ENCODE measurements at regions of chr16 and their contacts with region 1.

Region 1: GRCh38 chr16:3150346-3151218 is 15.8 kb downstream of the ZNF213 start:
- DNase-seq: peak; percentile 96
- ATAC-seq: peak; percentile 86
- H3K4me3 ChIP-seq: peak overlapping the region; percentile 58 to 87 (median 71)
- H3K4me3 Mint-ChIP-seq: peak overlapping the region; percentile 92
- H3K27ac ChIP-seq: peak overlapping the region; percentile 29 to 54
- H3K27ac Mint-ChIP-seq: peak overlapping the region; percentile 95
- H3K4me1 ChIP-seq: peaks cover 22 to 37% of the 10 kb centered on the region in 2 donors
- H3K4me1 Mint-ChIP-seq: peaks cover 28% of the 10 kb centered on the region
- H3K27me3 ChIP-seq: no peaks in the 10 kb centered on the region
- H3K27me3 Mint-ChIP-seq: no peaks in the 10 kb centered on the region
- CTCF ChIP-seq: no peak

Region 2: DNA sequence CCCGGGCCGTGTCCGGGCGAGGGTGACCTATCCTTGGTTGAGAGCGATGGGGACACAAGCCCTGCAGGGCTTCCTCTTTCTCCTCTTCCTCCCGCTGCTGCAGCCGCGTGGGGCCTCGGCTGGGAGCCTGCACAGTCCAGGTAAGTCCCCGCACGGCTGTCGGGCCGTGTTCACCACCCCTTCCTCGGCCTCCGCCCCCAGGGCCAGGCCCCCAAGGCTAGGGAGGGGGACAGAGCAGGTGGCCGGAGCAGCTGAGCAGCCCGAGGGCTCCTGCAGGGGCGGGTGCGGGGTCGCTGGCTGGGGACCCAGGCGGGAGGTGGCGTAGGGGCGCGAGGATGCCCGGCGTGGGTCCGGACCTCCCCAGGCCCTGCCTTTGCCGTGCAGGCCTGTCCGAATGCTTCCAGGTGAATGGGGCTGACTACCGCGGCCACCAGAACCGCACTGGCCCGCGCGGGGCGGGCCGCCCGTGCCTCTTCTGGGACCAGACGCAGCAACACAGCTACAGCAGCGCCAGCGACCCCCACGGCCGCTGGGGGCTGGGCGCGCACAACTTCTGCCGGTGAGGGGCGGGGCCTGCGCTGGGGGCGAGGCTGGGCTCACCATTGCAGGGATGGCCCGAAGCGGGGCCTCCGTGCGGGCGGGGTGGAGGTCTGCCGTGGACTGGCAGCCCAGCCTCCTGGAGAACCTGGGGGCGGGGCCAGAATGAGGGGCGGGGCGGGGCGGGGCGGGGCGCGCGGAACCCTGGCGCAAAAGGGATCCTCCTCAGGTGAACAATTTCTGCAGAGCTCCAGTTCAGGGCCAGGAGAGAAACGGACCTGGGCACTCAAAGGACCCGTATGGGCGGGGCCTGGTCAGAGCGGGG is 185.9 kb before region 1 on chr16:
- CTCF ChIA-PET with region 1: no interaction called
- POLR2A ChIA-PET with region 1: no interaction called
- intact Hi-C with region 1: no loop called
- DNase-seq: peak; percentile 76
- ATAC-seq: peak; percentile 22
- H3K4me3 ChIP-seq: peak overlapping the region in 4 of 5 experiments; percentile 39 to 61 (median 54)
- H3K4me3 Mint-ChIP-seq: peak overlapping the region; percentile 84
- H3K27ac ChIP-seq: no peak overlapping the region
- H3K27ac Mint-ChIP-seq: no peak overlapping the region
- H3K4me1 ChIP-seq: peaks cover 67% of the 10 kb centered on the region in 2 donors
- H3K4me1 Mint-ChIP-seq: peaks cover 37% of the 10 kb centered on the region
- H3K27me3 ChIP-seq: peaks cover 0 to 63% (median 19%) of the 10 kb centered on the region in 4 experiments
- H3K27me3 Mint-ChIP-seq: peaks cover 22% of the 10 kb centered on the region
- CTCF ChIP-seq: no peak

Region 3: DNA sequence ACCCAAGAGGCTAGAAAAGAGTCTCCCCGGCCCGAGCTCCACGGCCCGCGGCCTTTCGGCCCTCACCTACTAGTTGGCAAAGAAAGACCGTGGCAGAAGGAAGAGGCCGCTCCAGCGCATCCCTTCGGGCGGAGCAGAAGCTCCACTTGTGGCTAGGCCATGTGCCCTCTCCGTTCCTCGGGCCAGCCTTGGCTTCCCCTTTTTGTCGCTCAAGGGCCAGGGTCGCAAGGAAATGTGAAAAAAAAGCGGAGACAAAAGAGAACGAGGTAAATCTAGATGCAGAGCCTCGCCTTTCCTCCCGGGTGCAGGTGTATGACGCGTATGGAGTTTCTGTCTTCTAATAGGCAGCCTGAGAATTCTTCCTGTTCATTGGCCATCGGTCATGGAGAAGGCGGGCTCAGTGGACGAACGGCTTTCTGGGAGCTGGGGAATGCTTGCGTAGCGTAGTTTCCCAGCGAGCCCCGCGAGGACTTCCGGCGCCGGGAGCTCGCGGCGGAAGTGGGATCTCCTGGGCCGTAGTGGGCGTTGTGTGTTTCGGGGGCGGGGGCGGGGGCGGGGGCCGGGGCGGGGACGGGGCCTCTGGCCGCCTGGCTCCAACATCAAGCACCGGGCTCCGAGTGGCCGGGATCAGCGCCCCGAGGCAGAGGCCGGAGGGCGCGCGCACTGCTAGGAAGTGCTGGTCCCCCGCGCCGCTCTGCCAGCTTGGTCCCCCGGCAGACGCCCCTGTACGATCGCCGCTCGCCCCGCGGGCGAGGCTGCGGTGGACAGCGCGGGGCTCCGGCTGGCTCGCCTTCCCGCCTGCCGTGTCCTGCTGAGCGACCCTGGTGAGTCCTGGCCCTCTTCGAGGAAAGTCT is 15.8 kb before region 1 on chr16 and contains the start of gene ZNF213:
- CTCF ChIA-PET with region 1: interaction called, 42 read pairs
- POLR2A ChIA-PET with region 1: interaction called, 31 read pairs
- intact Hi-C with region 1: loop called (anchors 1 kb)
- DNase-seq: peak; percentile 97
- ATAC-seq: peak; percentile 98
- H3K4me3 ChIP-seq: peak within 1 kb of the TSS; percentile 70 to 99 (median 86)
- H3K4me3 Mint-ChIP-seq: peak within 1 kb of the TSS; percentile 98
- H3K27ac ChIP-seq: peak within 1 kb of the TSS; percentile 91 to 93
- H3K27ac Mint-ChIP-seq: peak within 1 kb of the TSS; percentile 97
- H3K4me1 ChIP-seq: peaks cover 15 to 20% of the 10 kb centered on the region in 2 donors
- H3K4me1 Mint-ChIP-seq: peaks cover 29% of the 10 kb centered on the region
- H3K27me3 ChIP-seq: no peaks in the 10 kb centered on the region
- H3K27me3 Mint-ChIP-seq: no peaks in the 10 kb centered on the region
- CTCF ChIP-seq: no peak
- total RNA-seq, gene ZNF213: 7.2 and 9.5 TPM in 2 replicates

Region 4: GRCh38 chr16:3173892-3174617 is 23.5 kb after region 1 on chr16:
- CTCF ChIA-PET with region 1: interaction called, 4 read pairs
- POLR2A ChIA-PET with region 1: no interaction called
- intact Hi-C with region 1: loop called (anchors 1 kb)
- DNase-seq: peak; percentile 44
- ATAC-seq: no peak
- H3K4me3 ChIP-seq: peak overlapping the region in 1 of 5 experiments; percentile 33
- H3K4me3 Mint-ChIP-seq: peak overlapping the region; percentile 23
- H3K27ac ChIP-seq: no peak overlapping the region
- H3K27ac Mint-ChIP-seq: no peak overlapping the region
- H3K4me1 ChIP-seq: peaks cover 40 to 47% of the 10 kb centered on the region in 2 donors
- H3K4me1 Mint-ChIP-seq: peaks cover 29% of the 10 kb centered on the region
- H3K27me3 ChIP-seq: peaks cover 0 to 84% (median 55%) of the 10 kb centered on the region in 4 experiments
- H3K27me3 Mint-ChIP-seq: peaks cover 77% of the 10 kb centered on the region
- CTCF ChIP-seq: no peak

Region 5: DNA sequence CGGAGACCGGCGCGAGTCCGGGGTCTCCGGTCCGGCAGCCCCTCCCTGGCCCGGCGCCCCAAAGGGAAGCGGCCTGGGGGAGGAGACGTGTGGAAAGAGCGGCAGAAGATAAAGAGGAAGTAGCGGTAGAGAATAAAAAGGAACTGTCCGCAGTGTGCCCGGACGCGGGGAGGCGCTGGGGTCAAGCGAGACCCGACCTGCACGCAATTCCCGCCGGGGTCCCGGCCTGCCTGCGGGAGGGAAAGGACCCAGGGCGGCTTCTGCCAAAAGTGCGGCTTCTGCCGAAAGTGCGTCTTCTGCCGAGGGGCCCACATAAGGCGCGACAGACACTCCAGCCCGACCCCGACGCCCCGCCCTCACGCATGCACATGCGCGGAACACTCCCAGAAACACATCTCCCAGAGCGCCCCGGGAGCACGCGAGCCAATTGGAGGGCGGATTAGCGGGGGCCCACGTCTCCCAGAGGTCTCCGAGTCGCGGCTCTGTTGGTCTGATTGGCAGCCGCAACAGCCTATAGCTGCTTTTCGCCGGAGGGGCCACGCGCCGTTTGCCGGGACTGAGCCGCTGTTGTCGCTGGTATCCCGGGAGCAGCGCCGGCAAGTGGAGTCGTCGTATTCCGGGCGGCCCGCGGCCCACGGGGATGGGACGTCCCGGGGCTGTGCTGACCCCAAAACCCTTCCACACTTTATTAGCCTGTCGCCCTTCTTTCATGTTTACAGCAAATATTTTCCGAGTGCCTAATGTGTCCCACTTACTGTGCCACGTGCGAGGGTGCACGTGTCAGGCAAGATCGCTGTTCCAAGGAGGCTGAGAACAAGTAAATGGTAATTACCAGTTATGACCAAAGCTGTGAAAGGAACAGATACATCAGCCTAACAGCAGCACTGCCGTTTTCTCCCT is 113.8 kb after region 1 on chr16:
- CTCF ChIA-PET with region 1: no interaction called
- POLR2A ChIA-PET with region 1: interaction called, 7 read pairs
- intact Hi-C with region 1: loop called (anchors 10 kb)
- DNase-seq: peak; percentile 97
- ATAC-seq: peak; percentile 86
- H3K4me3 ChIP-seq: peak overlapping the region; percentile 75 to 84 (median 78)
- H3K4me3 Mint-ChIP-seq: peak overlapping the region; percentile 92
- H3K27ac ChIP-seq: peak overlapping the region; percentile 85 to 86
- H3K27ac Mint-ChIP-seq: peak overlapping the region; percentile 95
- H3K4me1 ChIP-seq: peaks cover 9 to 18% of the 10 kb centered on the region in 2 donors
- H3K4me1 Mint-ChIP-seq: peaks cover 28% of the 10 kb centered on the region
- H3K27me3 ChIP-seq: no peaks in the 10 kb centered on the region
- H3K27me3 Mint-ChIP-seq: no peaks in the 10 kb centered on the region
- CTCF ChIP-seq: peak; percentile 54

Region 6: DNA sequence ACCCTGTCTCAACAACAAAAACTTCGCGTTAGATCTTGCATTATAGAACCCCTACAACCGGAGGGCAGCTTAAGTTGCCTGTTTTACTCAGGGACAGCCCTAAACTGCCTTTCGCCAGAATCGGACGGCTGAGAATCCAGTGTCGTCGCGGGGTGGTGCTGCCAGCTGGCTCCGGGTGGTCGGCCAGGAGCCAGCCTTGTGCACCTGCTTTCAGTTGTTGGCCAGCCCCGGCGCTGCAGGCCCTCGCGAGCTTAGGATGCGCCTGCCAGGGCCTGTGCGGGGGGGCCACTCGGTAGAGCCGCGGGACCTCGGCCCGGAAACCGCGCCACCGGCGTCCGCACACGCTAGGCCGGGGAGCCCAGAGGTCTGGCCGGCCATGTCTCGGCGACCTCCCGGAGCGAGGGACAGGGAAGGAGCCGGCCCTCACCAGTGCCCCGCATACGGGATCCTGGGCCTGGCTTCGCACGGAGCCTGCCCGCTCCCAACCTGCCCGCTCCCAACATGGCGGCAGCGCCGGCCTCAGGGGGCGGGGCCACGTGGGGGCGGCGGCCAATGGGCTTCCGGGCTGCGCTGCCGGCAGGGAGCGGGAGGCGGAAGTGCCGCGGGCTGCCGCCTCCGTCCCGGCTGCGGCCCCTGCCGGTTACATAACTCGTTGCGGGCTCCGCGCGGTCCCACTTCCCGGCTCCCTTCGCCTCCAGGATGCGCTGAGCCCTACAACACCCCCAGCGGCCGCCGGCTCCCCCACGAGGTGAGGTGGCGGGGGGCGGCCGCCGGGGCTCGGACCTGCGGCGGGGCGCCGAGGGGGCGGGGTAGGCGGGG is 307.1 kb after region 1 on chr16:
- CTCF ChIA-PET with region 1: no interaction called
- POLR2A ChIA-PET with region 1: interaction called, 3 read pairs
- intact Hi-C with region 1: loop called (anchors 5 kb)
- DNase-seq: peak; percentile 96
- ATAC-seq: peak; percentile 94
- H3K4me3 ChIP-seq: peak overlapping the region; percentile 48 to 86 (median 73)
- H3K4me3 Mint-ChIP-seq: peak overlapping the region; percentile 84
- H3K27ac ChIP-seq: peak overlapping the region; percentile 87 to 95
- H3K27ac Mint-ChIP-seq: peak overlapping the region; percentile 90
- H3K4me1 ChIP-seq: peaks cover 28 to 39% of the 10 kb centered on the region in 2 donors
- H3K4me1 Mint-ChIP-seq: peaks cover 50% of the 10 kb centered on the region
- H3K27me3 ChIP-seq: no peaks in the 10 kb centered on the region
- H3K27me3 Mint-ChIP-seq: no peaks in the 10 kb centered on the region
- CTCF ChIP-seq: peak; percentile 63

Measured in B cell (primary cell).